HEK293T (cell line): ENCODE measurements at regions of chr19 and their contacts with region 1.

Region 1: GRCh38 chr19:50258918-50259372 is 55.5 kb downstream of the MYH14 start:
- DNase-seq: peak; percentile 70

Region 2: GRCh38 chr19:50147462-50148423 is 111.2 kb before region 1 on chr19:
- CTCF ChIA-PET with region 1: interaction called, 14 read pairs
- POLR2A ChIA-PET with region 1: no interaction called
- DNase-seq: peak; percentile 83

Region 3: DNA sequence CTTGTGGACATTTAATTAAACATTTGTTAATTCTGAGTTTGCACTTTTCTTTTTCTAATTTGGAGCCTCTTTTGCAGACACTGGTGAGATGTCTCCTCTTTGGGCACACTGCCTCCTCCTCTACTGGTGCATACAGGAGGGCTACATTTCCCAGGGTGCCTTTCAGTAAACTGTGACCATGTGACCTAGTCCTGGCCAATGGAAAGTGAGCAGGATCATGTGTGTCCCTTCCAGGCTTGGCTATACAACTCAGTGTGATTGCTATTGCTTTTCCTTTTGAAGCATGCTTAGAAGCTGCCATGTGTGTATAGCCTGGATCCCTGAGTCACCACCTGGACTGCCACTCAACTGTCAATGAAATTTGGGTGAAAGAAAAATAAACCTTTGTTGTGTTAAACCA is 100.4 kb before region 1 on chr19:
- CTCF ChIA-PET with region 1: no interaction called
- POLR2A ChIA-PET with region 1: no interaction called
- DNase-seq: no peak

Region 4: DNA sequence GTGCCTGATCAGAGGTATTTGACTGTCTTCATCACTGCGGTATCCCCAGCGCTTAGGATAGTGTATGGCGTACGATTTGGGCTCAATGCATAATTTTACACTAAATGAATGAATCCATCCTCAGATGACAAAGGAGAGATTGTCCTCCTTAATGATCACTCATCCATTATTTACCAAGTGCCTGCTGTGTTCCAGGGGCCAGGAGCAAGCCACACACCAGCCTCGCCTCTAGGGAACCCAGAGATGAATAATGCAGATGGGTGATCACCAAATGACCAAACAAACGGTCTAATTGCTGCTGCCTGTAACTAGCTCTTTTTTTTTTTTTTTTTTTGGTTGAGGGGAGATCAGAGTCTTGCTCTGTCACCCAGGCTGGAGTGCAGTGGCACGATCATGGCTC is 505.5 kb after region 1 on chr19:
- CTCF ChIA-PET with region 1: interaction called, 13 read pairs
- POLR2A ChIA-PET with region 1: no interaction called
- DNase-seq: no peak